Transverse colon (tissue), 4 donors: ENCODE measurements at regions of chr17 and their contacts with region 1.

Region 1: DNA sequence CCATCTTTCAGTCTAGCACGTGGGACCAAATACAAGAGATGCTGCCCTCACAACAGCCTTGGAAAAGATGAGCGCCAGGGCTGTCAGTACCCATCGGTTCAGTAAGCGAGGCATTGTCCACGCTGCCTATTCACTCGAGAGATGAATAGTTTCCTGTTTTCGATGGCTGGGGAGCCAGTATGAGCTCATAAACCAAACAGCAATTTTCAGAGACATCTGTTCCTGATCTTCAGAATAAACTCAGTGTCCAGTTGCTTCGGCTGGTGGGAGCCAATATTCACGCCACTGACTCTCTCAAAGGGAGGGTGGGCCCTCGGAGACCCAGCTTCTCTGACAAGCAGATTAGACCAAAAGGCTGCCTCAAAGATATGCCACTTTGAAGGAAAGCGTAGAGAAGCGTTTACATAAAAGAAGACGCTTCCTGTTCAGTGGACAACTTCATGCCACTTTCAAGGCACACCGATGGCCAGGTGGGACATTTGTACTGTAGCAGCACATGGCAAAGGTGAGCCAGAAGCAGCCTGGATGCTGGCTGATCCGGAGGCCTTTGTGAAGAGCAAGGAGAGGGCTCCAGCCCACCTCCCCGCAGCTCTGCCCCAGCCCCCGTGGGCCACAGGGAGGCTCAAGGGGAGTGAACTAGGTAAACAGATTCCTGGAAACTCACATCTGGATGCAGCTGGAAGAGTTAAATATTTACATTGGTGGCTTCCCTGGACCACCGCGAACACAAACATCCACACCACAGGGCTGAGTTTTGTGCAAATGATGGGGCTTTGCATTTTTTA is 6.0 kb downstream of the TIMM22 start:
- DNase-seq: no peak
- H3K4me3 ChIP-seq: no peak overlapping the region
- H3K27ac ChIP-seq: peak overlapping the region; percentile 48 to 84 (median 70)
- H3K4me1 ChIP-seq: peaks cover 32 to 73% (median 55%) of the 10 kb centered on the region in 4 donors
- H3K27me3 ChIP-seq: no peaks in the 10 kb centered on the region
- CTCF ChIP-seq: no peak
- EP300 ChIP-seq: no peak
- POLR2A ChIP-seq: no peak

Region 2: DNA sequence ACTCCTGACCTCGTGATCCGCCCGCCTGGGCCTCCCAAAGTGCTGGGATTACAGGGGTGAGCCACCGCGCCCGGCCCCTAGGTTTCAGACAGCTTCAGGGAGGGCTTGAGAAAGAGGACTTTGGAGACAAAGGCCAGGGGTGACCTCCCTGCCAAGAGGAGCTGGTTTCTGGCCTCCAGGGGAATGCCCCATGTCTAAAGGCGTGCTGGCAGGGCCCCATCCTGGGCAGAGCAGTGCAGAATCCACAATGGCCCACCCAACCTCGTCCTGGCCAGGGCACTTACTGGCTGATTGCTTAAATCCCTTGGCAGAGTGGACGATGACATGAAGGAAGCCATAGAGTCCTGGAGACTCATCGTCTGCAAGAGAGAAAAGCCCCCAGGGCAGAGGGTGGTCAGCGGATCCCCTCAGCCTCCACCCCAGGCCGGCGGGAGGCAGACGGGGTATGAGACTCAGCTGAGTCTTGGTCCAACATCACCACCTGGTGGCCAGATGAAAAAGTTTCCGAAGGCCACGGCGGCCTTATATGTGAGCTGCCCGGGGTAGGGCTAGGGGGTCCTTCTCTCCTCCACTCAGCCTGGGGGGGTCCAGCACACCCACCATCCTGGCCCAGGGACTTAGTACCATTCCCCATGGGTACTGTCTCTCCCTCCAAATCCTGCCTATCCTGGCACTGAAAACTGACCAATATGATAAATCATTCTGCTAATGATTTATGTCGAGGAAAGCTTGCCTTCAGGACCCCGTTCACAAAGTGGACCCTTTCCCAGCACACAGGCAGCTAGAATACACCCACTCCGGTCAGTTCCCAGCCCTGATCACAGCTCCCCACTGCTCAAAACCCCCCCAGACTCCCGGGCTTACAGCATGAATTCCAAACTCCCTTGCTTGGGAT is 53.0 kb after region 1 on chr17:
- in situ Hi-C with region 1: no loop called
- intact Hi-C with region 1: loop called (anchors 5 kb)
- DNase-seq: peak; percentile 41
- H3K4me3 ChIP-seq: no peak overlapping the region
- H3K27ac ChIP-seq: no peak overlapping the region
- H3K4me1 ChIP-seq: no peaks in the 10 kb centered on the region
- H3K27me3 ChIP-seq: no peaks in the 10 kb centered on the region
- CTCF ChIP-seq: peak; percentile 59 to 73 (median 62)
- EP300 ChIP-seq: no peak
- POLR2A ChIP-seq: no peak